MCF 10A (cell line): ENCODE measurements at regions of chr20 and their contacts with region 1.

Region 1: GRCh38 chr20:14512811-14513210 is 175.4 kb upstream of the FLRT3 start:
- DNase-seq: peak; percentile 16
- H3K4me3 Mint-ChIP-seq: no peak overlapping the region
- H3K27ac Mint-ChIP-seq: no peak overlapping the region
- H3K4me1 Mint-ChIP-seq: no peaks in the 10 kb centered on the region
- H3K27me3 Mint-ChIP-seq: no peaks in the 10 kb centered on the region
- CTCF ChIP-seq: no peak

Region 2: GRCh38 chr20:14498772-14499171 is 14.0 kb before region 1 on chr20:
- CTCF ChIA-PET with region 1: no interaction called
- POLR2A ChIA-PET with region 1: interaction called, 10 read pairs
- intact Hi-C with region 1: no loop called
- DNase-seq: no peak
- H3K4me3 Mint-ChIP-seq: no peak overlapping the region
- H3K27ac Mint-ChIP-seq: no peak overlapping the region
- H3K4me1 Mint-ChIP-seq: no peaks in the 10 kb centered on the region
- H3K27me3 Mint-ChIP-seq: no peaks in the 10 kb centered on the region
- CTCF ChIP-seq: no peak

Region 3: DNA sequence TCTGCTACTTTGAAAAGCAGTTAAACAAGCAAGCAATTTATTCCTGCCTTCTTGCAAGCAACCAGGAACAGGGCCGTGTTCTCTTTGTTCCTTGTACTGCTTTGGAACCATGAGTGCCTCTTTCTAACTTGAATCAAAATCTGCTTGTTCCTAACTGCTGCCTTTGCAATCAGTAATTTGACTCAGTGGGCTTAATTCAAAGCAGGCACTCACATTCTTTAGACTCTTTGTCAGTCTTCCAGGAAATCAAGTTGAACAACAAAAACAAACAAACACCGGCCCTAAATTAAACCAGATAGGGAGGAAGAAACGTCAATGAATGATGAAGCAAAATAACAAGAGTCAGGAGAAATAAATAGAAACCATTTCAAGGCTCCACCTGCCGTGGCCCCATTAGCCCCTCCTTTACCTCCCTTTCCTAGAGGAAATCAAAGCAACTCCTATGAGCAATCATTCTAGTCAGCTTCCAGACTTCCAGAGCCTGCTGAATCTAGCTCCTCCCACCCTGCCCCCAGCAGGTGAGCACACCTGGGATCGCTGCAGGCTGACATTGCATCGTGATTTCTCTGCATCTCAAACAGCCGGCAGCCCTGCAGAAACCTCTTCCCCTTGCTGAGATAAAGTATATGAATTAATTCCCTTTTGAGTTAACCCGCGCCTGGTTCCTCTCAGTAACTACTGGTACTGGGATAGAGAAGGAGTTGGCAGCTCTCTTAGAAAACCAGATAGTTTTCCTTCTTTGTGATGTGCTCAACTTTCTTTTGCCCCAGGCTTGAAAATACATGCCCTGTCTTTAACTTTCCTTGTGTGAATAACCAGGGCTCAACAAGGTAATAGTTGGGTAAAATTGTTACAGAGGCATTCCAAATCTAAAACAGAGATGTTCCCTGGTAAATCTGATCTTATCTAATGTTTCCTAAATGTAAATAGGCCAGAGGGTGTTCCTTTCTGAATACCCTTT is 406.9 kb after region 1 on chr20:
- CTCF ChIA-PET with region 1: no interaction called
- POLR2A ChIA-PET with region 1: no interaction called
- intact Hi-C with region 1: no loop called
- DNase-seq: peak; percentile 58
- H3K4me3 Mint-ChIP-seq: no peak overlapping the region
- H3K27ac Mint-ChIP-seq: peak overlapping the region; percentile 24
- H3K4me1 Mint-ChIP-seq: peaks cover 28% of the 10 kb centered on the region
- H3K27me3 Mint-ChIP-seq: no peaks in the 10 kb centered on the region
- CTCF ChIP-seq: no peak